ENCODE measurements at regions of chr7 and their contacts with region 1.

Region 1: GRCh38 chr7:43834463-43835251 is 34.7 kb downstream of the MRPS24 start:
- DNase-seq: peak in 1 of 2 experiments; percentile 66
- ATAC-seq: no peak
- H3K4me3 ChIP-seq: 0 out of 3 replicates have a peak overlapping the region, but pooled peaks have one; percentile 20
- H3K27ac ChIP-seq: peak overlapping the region in 1 of 2 experiments; percentile 39; a peak in 1 of 6 replicates
- H3K4me1 ChIP-seq: peaks cover 3% of the 10 kb centered on the region; the same call in 1 of the 3 replicates
- CTCF ChIP-seq: no peak
- EP300 ChIP-seq: no peak
- POLR2A ChIP-seq: no peak
- RAD21 ChIP-seq: no peak

Region 2: GRCh38 chr7:43647673-43648472 is 186.8 kb before region 1 on chr7:
- CTCF ChIA-PET with region 1: interaction called, 13 read pairs
- POLR2A ChIA-PET with region 1: no interaction called
- DNase-seq: peak; percentile 66 to 83
- ATAC-seq: peak; percentile 85 to 86
- H3K4me3 ChIP-seq: no peak overlapping the region
- H3K27ac ChIP-seq: peak overlapping the region; percentile 69 to 92
- H3K4me1 ChIP-seq: peaks cover 62% of the 10 kb centered on the region
- CTCF ChIP-seq: no peak
- EP300 ChIP-seq: peak; percentile 21 to 60; a peak in 1 of 5 replicates
- POLR2A ChIP-seq: no peak
- RAD21 ChIP-seq: peak in 1 of 2 experiments; percentile 34; a peak in 2 of 5 replicates

Region 3: GRCh38 chr7:43721193-43721806 is 113.4 kb before region 1 on chr7:
- CTCF ChIA-PET with region 1: interaction called, 16 read pairs
- POLR2A ChIA-PET with region 1: no interaction called
- DNase-seq: peak; percentile 23 to 48
- ATAC-seq: no peak; a peak in 1 of 6 replicates
- H3K4me3 ChIP-seq: no peak overlapping the region
- H3K27ac ChIP-seq: no peak overlapping the region
- H3K4me1 ChIP-seq: peaks cover 8% of the 10 kb centered on the region
- CTCF ChIP-seq: peak; percentile 88
- EP300 ChIP-seq: no peak
- POLR2A ChIP-seq: no peak
- RAD21 ChIP-seq: peak; percentile 71 to 83

Region 4: DNA sequence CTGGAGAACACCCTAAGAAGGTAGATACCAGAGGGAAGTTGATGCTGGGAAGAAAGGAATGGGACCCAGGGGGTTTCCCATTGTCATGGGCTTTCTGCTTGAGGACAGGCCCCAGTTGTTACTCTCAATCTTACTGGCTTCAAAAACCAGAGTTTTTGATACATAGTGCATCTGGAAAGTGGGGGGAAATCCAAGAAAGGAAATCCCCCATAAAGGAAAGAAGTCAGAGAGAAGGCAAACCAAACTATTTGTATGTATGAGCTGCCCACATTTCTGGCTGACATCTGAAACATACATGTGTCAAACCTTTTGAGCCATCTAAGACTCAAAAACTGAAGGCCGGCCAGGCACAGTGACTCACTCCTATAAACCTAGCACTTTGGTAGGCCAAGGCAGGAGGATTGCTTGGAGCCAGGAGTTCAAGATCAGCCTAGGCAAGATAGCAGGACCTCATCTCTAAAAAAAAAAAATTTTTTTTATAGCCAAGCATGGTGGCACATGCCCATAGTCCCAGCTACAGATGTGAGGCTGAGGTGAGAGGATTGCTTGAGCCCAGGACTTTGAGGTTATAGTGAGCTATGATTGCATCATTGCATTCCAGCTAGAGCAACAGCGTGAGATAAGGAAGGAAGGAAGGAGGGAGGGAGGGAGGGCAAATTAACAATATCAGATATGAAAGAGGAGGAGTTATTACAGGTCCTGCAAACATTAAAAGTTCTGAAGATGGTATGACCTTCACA is 98.7 kb before region 1 on chr7:
- CTCF ChIA-PET with region 1: interaction called, 51 read pairs
- POLR2A ChIA-PET with region 1: no interaction called
- DNase-seq: no peak
- ATAC-seq: no peak
- H3K4me3 ChIP-seq: no peak overlapping the region
- H3K27ac ChIP-seq: peak overlapping the region; percentile 33 to 55; a peak in 1 of 6 replicates
- H3K4me1 ChIP-seq: peaks cover 8% of the 10 kb centered on the region; the same call in 2 of the 3 replicates
- CTCF ChIP-seq: no peak
- EP300 ChIP-seq: no peak
- POLR2A ChIP-seq: no peak
- RAD21 ChIP-seq: no peak

Region 5: DNA sequence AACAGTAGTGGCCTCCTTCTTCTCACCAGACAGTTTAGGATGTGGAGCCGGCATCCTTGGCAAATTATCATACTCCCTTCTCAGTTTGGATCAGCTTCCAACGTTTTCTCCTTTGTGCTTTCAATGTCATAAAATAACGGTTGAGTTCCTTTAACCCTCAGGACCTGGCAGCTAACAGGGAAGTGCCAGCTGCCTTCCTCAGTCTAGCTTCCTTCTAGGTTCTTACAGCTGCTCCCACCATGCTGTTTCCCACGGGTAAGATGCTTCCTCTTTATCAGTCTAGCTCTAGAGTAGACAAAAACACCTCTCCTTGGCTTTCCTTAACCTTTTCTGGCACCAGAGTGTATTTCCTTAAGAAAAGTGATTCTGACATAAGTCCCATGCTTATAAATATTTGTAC is 43.0 kb before region 1 on chr7:
- CTCF ChIA-PET with region 1: interaction called, 20 read pairs
- POLR2A ChIA-PET with region 1: no interaction called
- DNase-seq: no peak
- ATAC-seq: no peak
- H3K4me3 ChIP-seq: no peak overlapping the region
- H3K27ac ChIP-seq: no peak overlapping the region
- H3K4me1 ChIP-seq: no peaks in the 10 kb centered on the region
- CTCF ChIP-seq: no peak
- EP300 ChIP-seq: no peak
- POLR2A ChIP-seq: no peak
- RAD21 ChIP-seq: no peak

Region 6: DNA sequence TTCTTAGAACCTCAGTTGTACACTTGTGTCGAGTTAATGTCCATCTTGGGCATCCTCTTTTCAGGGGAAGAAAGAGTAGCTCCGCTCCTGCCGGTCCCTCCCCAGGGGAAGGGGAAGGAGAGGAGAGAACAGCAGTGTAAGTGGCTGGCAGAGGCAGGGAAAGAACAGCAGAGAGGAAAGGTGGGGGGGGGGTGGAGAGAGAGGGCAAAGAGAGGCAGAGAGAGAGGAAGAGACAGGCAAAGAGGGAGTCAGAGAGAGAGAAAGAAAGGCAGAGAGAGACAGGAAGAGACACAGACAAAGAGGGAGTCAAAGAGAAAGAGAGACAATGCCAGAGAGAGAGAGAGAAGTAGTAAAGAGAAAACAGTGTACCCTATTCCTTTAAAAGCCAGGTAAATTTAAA is 19.3 kb before region 1 on chr7:
- CTCF ChIA-PET with region 1: interaction called, 17 read pairs
- POLR2A ChIA-PET with region 1: no interaction called
- DNase-seq: no peak
- ATAC-seq: no peak
- H3K4me3 ChIP-seq: no peak overlapping the region
- H3K27ac ChIP-seq: no peak overlapping the region
- H3K4me1 ChIP-seq: 0 out of 3 replicates have a peak, but pooled peaks cover 3% of the 10 kb centered on the region
- CTCF ChIP-seq: no peak
- EP300 ChIP-seq: no peak
- POLR2A ChIP-seq: no peak
- RAD21 ChIP-seq: no peak

Region 7: GRCh38 chr7:44097064-44097932 is 262.6 kb after region 1 on chr7:
- CTCF ChIA-PET with region 1: no interaction called
- POLR2A ChIA-PET with region 1: no interaction called
- DNase-seq: no peak
- ATAC-seq: no peak
- H3K4me3 ChIP-seq: no peak overlapping the region
- H3K27ac ChIP-seq: no peak overlapping the region
- H3K4me1 ChIP-seq: 0 out of 3 replicates have a peak, but pooled peaks cover 4% of the 10 kb centered on the region
- CTCF ChIP-seq: no peak
- EP300 ChIP-seq: no peak
- POLR2A ChIP-seq: no peak
- RAD21 ChIP-seq: no peak

Measured in A549 (cell line).